ENCODE measurements at regions of chr22 and their contacts with region 1.

Region 1: GRCh38 chr22:41976401-41976901 is 7.2 kb downstream of the SEPTIN3 start:
- DNase-seq: peak in 19 of 35 experiments; percentile 7 to 66 (median 28)
- ATAC-seq: peak; percentile 73 to 88 (median 84)
- H3K4me3 ChIP-seq: peak overlapping the region; percentile 3 to 19
- H3K4me3 Mint-ChIP-seq: peak overlapping the region; percentile 55 to 72 (median 68)
- H3K27ac ChIP-seq: no peak overlapping the region
- H3K27ac Mint-ChIP-seq: no peak overlapping the region
- H3K4me1 ChIP-seq: peaks cover 0 to 14% of the 10 kb centered on the region in 2 experiments
- H3K4me1 Mint-ChIP-seq: peaks cover 0 to 14% (median 5%) of the 10 kb centered on the region in 3 donors
- H3K27me3 ChIP-seq: peaks cover 3 to 57% of the 10 kb centered on the region in 2 experiments
- H3K27me3 Mint-ChIP-seq: peaks cover 22 to 41% of the 10 kb centered on the region in 2 donors

Region 2: GRCh38 chr22:41883400-41883799 is 93.1 kb before region 1 on chr22:
- CTCF ChIA-PET with region 1: no interaction called
- POLR2A ChIA-PET with region 1: no interaction called
- DNase-seq: no peak
- ATAC-seq: no peak
- H3K4me3 ChIP-seq: no peak overlapping the region
- H3K4me3 Mint-ChIP-seq: no peak overlapping the region
- H3K27ac ChIP-seq: no peak overlapping the region
- H3K27ac Mint-ChIP-seq: no peak overlapping the region
- H3K4me1 ChIP-seq: peaks cover 0 to 6% of the 10 kb centered on the region in 2 experiments
- H3K4me1 Mint-ChIP-seq: no peaks in the 10 kb centered on the region
- H3K27me3 ChIP-seq: no peaks in the 10 kb centered on the region
- H3K27me3 Mint-ChIP-seq: no peaks in the 10 kb centered on the region

Region 3: GRCh38 chr22:41951898-41952474 is 24.5 kb before region 1 on chr22 and contains the start of gene SMIM45:
- CTCF ChIA-PET with region 1: interaction called in 1 of 2 experiments, 10 read pairs
- POLR2A ChIA-PET with region 1: no interaction called
- DNase-seq: no peak
- ATAC-seq: no peak
- H3K4me3 ChIP-seq: no peak within 1 kb of the TSS
- H3K4me3 Mint-ChIP-seq: no peak within 1 kb of the TSS
- H3K27ac ChIP-seq: no peak within 1 kb of the TSS
- H3K27ac Mint-ChIP-seq: no peak within 1 kb of the TSS
- H3K4me1 ChIP-seq: peaks cover 0 to 8% of the 10 kb centered on the region in 2 experiments
- H3K4me1 Mint-ChIP-seq: peaks cover 3 to 6% (median 5%) of the 10 kb centered on the region in 3 donors
- H3K27me3 ChIP-seq: peaks cover 0 to 4% of the 10 kb centered on the region in 2 experiments
- H3K27me3 Mint-ChIP-seq: no peaks in the 10 kb centered on the region